GM13977 (cell line): ENCODE measurements at regions of chr7 and their contacts with region 1.

Region 1: DNA sequence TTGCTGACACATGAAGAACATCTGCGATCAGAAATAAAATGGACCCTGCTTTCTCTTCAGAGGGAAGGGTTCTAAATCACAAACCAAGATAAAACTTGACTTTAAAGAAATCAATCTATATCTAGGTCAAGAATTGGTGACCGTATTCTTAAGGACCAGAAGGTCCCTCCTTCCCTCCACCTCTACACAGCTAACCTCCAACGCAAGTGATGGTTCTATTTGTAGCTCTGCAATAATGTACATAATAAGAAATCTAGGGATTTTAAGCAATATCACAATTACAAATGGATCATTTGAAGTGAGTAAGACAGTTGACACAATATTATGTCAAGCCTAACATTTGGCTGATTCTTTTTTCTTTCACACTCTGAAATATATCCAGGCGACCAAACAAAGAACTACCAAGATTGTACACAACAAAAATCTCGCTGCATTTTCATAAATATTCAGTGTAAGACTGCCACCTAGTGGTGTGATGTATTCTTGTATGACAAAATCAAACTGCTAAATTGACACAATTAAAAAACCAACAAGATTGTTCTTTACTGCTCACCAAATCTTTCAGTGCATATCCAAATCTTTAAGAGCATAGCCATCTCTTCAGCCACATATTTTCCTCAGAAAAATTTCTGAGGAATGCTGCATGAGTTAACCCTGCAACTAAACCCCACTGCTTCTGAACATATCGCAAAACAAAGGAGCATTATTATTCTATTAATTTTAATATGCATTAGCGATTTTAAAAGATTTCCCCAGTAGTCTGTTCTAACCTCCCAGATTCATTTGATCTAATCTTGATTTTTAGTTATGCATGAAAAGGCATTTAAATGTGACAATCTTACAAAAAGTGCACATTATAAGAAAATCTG is 44.5 kb downstream of the ICA1 start:
- DNase-seq: peak; percentile 42
- CTCF ChIP-seq: peak; percentile 51

Region 2: GRCh38 chr7:7438851-7439250 is 778.6 kb before region 1 on chr7:
- in situ Hi-C with region 1: loop called (anchors 25 kb)
- DNase-seq: no peak
- CTCF ChIP-seq: no peak

Region 3: DNA sequence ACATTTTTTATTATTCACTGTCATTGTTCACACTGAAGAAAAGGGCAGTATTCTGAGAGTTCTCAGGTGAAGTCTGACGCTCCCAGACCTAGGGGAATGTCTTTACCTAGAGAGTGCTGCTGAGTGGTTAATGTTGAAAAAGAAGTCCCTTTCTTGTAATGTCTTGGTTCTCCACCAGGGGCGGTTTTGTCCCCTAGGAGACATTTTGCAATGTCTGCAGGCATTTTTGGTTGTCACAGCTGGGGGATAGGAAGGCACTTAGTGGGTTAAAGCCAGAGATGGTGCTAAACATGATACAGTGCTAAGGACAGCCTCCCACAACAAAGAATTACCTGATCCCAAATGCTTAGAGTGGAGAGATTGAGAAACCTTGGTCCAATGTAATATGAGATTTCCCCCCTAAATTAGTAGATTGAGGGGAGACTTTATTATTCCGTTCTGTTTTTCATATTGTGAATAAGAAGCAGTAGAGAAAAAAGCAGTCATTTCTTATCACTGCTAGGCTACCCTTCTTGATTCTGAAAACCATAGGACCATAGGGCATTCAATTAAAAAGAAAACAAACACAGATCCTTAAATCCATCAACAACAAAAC is 563.7 kb before region 1 on chr7:
- in situ Hi-C with region 1: loop called (anchors 25 kb)
- DNase-seq: no peak
- CTCF ChIP-seq: peak; percentile 40

Region 4: GRCh38 chr7:7795203-7796135 is 422.0 kb before region 1 on chr7:
- in situ Hi-C with region 1: no loop called
- DNase-seq: no peak
- CTCF ChIP-seq: no peak

Region 5: GRCh38 chr7:8536431-8536830 is 319.0 kb after region 1 on chr7:
- in situ Hi-C with region 1: no loop called
- DNase-seq: no peak
- CTCF ChIP-seq: no peak